ENCODE measurements at regions of chr17 and their contacts with region 1.

Region 1: GRCh38 chr17:59859444-59860025 is 33.2 kb downstream of the TUBD1 start:
- DNase-seq: no peak
- H3K4me3 ChIP-seq: no peak overlapping the region
- H3K27me3 ChIP-seq: no peaks in the 10 kb centered on the region
- CTCF ChIP-seq: peak; percentile 55

Region 2: GRCh38 chr17:59870482-59870881 is 10.9 kb after region 1 on chr17:
- CTCF ChIA-PET with region 1: interaction called, 17 read pairs
- POLR2A ChIA-PET with region 1: no interaction called
- DNase-seq: no peak
- H3K4me3 ChIP-seq: no peak overlapping the region
- H3K27me3 ChIP-seq: no peaks in the 10 kb centered on the region
- CTCF ChIP-seq: no peak

Measured in BJ (cell line).